ENCODE measurements at regions of chr10 and their contacts with region 1.

Region 1: DNA sequence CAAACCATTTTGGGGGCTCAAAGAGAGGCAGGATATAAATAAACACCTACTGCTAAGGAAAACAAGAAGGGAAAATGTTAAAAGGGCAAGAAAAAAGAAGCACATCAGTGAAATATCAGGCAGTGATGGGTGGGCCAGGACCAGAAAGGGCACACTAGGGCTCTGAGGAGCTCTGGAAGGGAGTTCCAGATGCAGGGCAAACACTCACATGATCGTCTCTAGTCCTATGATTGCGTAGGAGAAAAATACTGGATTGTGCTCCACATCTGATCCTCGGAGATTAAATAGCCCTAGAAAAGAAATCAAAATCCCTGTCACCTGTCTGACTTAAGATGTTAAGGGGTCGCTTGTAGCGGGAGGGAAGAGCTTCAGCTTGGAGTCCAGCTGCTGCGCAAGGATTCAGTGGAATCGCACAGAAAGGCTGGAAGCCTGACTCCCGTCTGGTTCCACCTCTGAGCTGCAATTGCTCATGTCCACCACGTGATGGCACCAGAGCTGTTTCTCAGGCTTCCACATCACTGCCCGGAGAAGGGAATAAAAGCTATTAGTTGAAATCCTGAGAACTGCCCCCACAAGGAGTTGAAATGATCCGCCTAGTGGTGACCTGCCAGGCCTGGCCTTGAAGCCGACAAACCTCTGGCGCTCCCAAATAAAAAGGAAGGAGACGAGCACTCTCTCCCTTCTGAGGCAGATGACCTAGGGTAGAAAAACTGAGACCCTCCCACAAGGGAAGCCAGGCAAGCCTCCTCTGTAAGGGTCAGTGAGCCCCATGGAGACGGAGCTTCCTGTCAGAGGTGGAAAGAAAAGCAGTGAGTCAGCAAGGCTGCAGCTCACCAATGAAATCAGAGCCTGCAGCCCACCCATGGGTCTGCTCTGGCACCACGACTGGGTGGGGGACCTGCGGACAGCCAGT is 39.2 kb downstream of the XPNPEP1 start:
- DNase-seq: peak; percentile 82
- ATAC-seq: peak; percentile 92
- H3K4me3 ChIP-seq: no peak overlapping the region
- H3K27ac ChIP-seq: no peak overlapping the region
- H3K4me1 ChIP-seq: peaks cover 6% of the 10 kb centered on the region
- H3K27me3 ChIP-seq: no peaks in the 10 kb centered on the region
- CTCF ChIP-seq: peak; percentile 87

Region 2: DNA sequence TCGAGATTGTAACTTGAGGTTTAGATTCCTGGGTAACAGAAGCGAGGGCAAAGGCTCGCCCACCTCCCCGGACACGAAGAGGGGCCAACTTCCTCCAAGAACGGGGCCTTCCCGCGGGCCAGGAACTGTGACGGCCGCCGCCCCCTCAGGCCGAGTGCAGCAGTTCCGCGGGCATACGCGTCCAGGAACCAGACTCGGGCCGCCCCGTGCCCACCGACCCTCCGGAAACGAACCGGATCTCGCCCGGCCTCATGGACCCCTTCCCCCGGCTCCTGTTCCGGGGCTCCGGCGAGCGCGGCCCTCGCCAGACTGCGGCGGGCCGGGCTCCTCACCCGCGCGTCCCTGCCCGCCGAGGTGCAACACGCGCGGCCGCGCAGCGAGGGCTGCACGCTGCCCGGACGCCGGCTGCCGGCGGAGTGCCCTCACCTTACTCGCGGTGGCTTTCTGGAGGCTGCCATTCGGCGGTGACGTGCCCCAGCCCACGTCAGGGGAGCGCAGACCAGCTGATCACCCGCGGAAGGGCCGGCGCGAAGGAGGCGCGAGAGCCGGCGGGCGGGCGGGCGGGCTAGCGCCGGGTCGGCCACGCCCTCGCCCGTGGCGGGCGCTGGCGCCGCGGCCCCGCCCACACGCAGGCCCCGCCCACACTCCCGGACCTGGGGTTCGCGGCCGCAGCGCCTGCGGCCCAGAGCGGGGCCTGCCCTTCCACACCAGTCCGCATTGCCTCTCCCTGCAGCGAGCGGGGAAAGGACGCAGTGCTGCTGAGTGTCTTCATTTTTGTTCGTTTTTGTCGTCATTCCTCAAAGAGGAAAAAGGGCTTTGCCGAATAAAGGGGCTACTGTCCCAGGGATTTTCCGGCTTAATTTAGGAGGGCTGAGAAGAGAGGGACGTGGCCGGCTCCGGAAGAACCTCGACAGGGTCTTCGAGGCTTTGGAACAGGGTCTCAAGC is 39.1 kb after region 1 on chr10 and contains the start of gene XPNPEP1:
- CTCF ChIA-PET with region 1: no interaction called
- POLR2A ChIA-PET with region 1: no interaction called
- intact Hi-C with region 1: loop called (anchors 2 kb)
- DNase-seq: peak; percentile 76
- ATAC-seq: peak; percentile 94
- H3K4me3 ChIP-seq: peak within 1 kb of the TSS; percentile 76
- H3K27ac ChIP-seq: 0 out of 2 replicates have a peak within 1 kb of the TSS, but pooled peaks have one; percentile 39
- H3K4me1 ChIP-seq: peaks cover 20% of the 10 kb centered on the region
- H3K27me3 ChIP-seq: no peaks in the 10 kb centered on the region
- CTCF ChIP-seq: no peak
- total RNA-seq, gene XPNPEP1: 77.3 TPM in 2 replicates

Region 3: GRCh38 chr10:109966961-109967738 is 83.0 kb after region 1 on chr10:
- CTCF ChIA-PET with region 1: interaction called, 7 read pairs
- POLR2A ChIA-PET with region 1: no interaction called
- intact Hi-C with region 1: loop called (anchors 2 kb)
- DNase-seq: peak; percentile 56
- ATAC-seq: peak; percentile 72
- H3K4me3 ChIP-seq: peak overlapping the region; percentile 61
- H3K27ac ChIP-seq: peak overlapping the region; percentile 86
- H3K4me1 ChIP-seq: peaks cover 36% of the 10 kb centered on the region
- H3K27me3 ChIP-seq: no peaks in the 10 kb centered on the region
- CTCF ChIP-seq: no peak

Region 4: GRCh38 chr10:110016039-110016438 is 131.9 kb after region 1 on chr10:
- CTCF ChIA-PET with region 1: interaction called, 23 read pairs
- POLR2A ChIA-PET with region 1: no interaction called
- intact Hi-C with region 1: loop called (anchors 1 kb)
- DNase-seq: peak; percentile 19
- ATAC-seq: peak; percentile 57; the same call in 1 of the 2 replicates
- H3K4me3 ChIP-seq: no peak overlapping the region
- H3K27ac ChIP-seq: no peak overlapping the region
- H3K4me1 ChIP-seq: peaks cover 22% of the 10 kb centered on the region
- H3K27me3 ChIP-seq: no peaks in the 10 kb centered on the region
- CTCF ChIP-seq: peak; percentile 48

Region 5: DNA sequence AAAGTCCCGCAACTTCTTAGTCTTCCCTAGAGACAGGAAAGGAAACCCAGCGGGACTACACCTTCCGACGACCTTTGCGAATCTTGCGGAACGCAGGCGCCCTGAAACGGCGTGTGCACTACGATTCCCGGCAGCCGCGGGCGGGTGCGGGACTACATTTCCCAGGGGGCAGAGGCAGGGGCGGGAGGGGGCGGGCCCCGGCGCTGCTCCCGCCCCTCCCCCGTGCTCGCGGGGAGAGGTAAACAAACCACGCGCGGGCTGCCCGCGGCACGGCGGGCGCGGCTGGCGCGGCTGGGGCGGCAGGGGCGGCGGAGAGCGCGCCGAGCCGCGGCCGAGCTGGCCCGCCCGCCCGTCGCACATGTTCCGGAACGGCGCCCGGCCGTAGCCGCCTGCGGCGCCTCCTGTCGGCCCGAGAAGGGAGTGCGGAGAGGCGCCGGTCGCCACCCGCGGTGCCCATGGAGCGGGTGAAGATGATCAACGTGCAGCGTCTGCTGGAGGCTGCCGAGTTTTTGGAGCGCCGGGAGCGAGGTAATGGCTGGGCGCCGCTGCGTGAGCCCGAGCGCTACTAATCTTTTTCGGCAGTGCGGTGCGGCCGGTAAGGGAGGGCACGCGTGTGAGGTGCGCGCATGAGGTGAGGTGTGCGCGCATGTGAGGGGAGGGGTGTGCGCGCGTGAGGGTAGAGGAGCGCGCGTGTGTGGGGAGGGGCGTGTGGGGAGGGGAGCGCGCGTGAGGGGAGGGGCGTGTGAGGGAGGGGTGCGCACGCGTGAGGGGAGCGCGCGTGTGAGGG is 341.8 kb after region 1 on chr10:
- CTCF ChIA-PET with region 1: interaction called, 7 read pairs
- POLR2A ChIA-PET with region 1: no interaction called
- intact Hi-C with region 1: loop called (anchors 2 kb)
- DNase-seq: peak; percentile 90
- ATAC-seq: peak; percentile 89
- H3K4me3 ChIP-seq: peak overlapping the region; percentile 81
- H3K27ac ChIP-seq: no peak overlapping the region
- H3K4me1 ChIP-seq: 0 out of 2 replicates have a peak, but pooled peaks cover 4% of the 10 kb centered on the region
- H3K27me3 ChIP-seq: no peaks in the 10 kb centered on the region
- CTCF ChIP-seq: peak; percentile 46